ENCODE measurements at regions of chr12 and their contacts with region 1.

Region 1: DNA sequence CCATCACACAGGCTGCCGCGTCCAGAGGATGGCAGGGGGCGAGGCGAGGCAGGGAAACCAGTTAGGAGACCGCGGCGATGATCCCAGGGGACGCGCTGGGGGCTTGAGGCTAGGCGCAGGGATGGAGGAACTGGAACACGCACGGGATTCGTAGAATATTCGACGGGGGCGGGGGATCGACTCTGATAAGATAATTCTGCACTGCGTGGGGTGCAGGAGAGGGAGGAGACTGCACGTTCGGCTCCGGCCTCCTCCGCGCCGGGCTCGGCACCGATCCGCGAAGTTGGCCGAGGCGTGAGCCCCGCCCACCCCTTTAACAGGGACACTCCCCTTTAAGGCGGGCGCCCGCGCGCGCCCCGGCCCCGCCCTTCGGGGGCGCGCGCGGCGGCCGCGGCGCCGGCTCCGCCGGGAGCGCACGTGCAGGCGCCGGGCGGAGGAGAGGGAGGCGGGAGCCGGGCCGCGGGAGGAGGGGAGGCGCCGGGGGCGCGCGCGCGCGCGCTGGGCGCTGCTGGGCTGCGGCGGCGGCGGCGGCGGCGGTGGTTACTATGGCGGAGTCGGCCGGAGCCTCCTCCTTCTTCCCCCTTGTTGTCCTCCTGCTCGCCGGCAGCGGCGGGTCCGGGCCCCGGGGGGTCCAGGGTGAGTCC is at the start of gene ACVR1B:
- H3K4me3 ChIP-seq: peak within 1 kb of the TSS; percentile 92
- H3K27ac ChIP-seq: peak within 1 kb of the TSS; percentile 78; the same call in 1 of the 2 replicates
- H3K4me1 ChIP-seq: peaks cover 13% of the 10 kb centered on the region
- CTCF ChIP-seq: no peak

Region 2: GRCh38 chr12:51970904-51971646 is 19.8 kb after region 1 on chr12:
- CTCF ChIA-PET with region 1: interaction called, 19 read pairs
- POLR2A ChIA-PET with region 1: no interaction called
- H3K4me3 ChIP-seq: no peak overlapping the region; the same call in 1 of the 2 replicates
- H3K27ac ChIP-seq: no peak overlapping the region
- H3K4me1 ChIP-seq: peaks cover 20% of the 10 kb centered on the region
- CTCF ChIP-seq: peak; percentile 32; the same call in 1 of the 2 replicates